Transverse colon (tissue), 4 donors: ENCODE measurements at regions of chr10 and their contacts with region 1.

Region 1: GRCh38 chr10:24533981-24534380 is 189.7 kb downstream of the ARHGAP21 start:
- DNase-seq: no peak
- H3K4me3 ChIP-seq: no peak overlapping the region
- H3K27ac ChIP-seq: no peak overlapping the region
- H3K4me1 ChIP-seq: no peaks in the 10 kb centered on the region
- H3K27me3 ChIP-seq: no peaks in the 10 kb centered on the region
- CTCF ChIP-seq: no peak
- EP300 ChIP-seq: no peak
- POLR2A ChIP-seq: no peak

Region 2: DNA sequence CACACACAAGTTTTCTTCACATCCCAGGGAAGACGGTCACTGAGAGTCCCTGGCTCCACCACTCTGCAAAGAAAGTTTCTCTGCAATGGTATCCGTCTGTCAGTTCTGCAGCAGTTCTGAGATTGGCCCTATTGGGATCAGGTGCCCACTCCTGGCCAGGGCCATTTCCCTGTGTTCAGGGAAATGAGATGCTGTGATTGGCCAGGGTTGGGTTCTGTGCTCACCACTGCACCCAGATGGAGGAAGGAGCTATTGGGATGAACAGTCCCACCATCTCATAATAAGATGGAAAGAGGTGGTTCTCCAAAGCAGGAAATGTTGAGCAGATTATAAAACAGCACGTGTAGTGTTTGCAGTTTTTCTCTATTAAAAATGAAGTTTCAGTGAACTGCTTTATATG is 1806.3 kb before region 1 on chr10:
- in situ Hi-C with region 1: no loop called
- intact Hi-C with region 1: loop called (anchors 5 kb)
- DNase-seq: no peak
- H3K4me3 ChIP-seq: no peak overlapping the region
- H3K27ac ChIP-seq: no peak overlapping the region
- H3K4me1 ChIP-seq: no peaks in the 10 kb centered on the region
- H3K27me3 ChIP-seq: no peaks in the 10 kb centered on the region
- CTCF ChIP-seq: no peak
- EP300 ChIP-seq: no peak
- POLR2A ChIP-seq: no peak

Region 3: GRCh38 chr10:24255115-24255880 is 278.7 kb before region 1 on chr10:
- in situ Hi-C with region 1: no loop called
- intact Hi-C with region 1: no loop called
- DNase-seq: no peak
- H3K4me3 ChIP-seq: no peak overlapping the region
- H3K27ac ChIP-seq: no peak overlapping the region
- H3K4me1 ChIP-seq: no peaks in the 10 kb centered on the region
- H3K27me3 ChIP-seq: no peaks in the 10 kb centered on the region
- CTCF ChIP-seq: no peak
- EP300 ChIP-seq: no peak
- POLR2A ChIP-seq: no peak